RWPE1 (cell line): ENCODE measurements at regions of chr3 and their contacts with region 1.

Region 1: GRCh38 chr3:130761730-130762311 is 15.2 kb upstream of the PIK3R4 start:
- DNase-seq: no peak
- H3K27ac ChIP-seq: no peak overlapping the region
- CTCF ChIP-seq: no peak

Region 2: DNA sequence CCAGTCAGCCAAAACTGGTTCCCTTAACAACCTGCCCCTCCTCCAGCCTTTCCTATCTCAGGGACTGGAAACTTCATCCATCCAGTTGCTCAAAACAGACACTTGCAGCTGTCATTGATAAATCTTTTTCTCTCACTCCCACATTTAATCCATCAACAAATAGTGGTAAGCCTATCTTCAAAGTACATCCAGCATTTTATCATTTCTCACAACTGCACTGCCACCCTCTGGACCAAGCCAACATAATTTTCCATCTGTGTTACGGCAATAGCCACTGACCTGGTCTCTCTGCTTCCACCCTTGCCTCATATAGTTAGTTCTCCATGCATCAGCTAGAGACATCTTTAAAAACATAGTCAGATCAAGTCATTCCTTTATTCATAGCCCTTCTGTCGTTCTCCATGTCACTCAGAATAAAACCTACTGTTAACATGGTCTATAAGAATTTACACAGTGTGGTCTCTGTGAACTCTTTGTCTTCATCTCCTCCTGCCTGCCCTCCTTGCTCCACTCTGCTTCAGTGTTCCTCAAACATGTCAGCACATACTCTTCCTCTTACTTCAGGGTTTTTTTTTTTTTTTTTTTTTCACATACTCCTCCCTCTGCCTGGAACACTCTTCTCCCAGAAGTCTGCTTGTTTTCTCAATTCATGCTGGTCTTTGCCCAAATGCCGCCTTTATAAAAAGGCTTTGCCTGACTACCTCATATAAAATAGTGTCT is 518.8 kb before region 1 on chr3:
- CTCF ChIA-PET with region 1: no interaction called
- POLR2A ChIA-PET with region 1: no interaction called
- DNase-seq: no peak
- H3K27ac ChIP-seq: no peak overlapping the region
- CTCF ChIP-seq: no peak

Region 3: GRCh38 chr3:130787422-130788068 is 25.7 kb after region 1 on chr3:
- CTCF ChIA-PET with region 1: no interaction called
- POLR2A ChIA-PET with region 1: interaction called, 12 read pairs
- DNase-seq: no peak
- H3K27ac ChIP-seq: no peak overlapping the region
- CTCF ChIP-seq: no peak

Region 4: DNA sequence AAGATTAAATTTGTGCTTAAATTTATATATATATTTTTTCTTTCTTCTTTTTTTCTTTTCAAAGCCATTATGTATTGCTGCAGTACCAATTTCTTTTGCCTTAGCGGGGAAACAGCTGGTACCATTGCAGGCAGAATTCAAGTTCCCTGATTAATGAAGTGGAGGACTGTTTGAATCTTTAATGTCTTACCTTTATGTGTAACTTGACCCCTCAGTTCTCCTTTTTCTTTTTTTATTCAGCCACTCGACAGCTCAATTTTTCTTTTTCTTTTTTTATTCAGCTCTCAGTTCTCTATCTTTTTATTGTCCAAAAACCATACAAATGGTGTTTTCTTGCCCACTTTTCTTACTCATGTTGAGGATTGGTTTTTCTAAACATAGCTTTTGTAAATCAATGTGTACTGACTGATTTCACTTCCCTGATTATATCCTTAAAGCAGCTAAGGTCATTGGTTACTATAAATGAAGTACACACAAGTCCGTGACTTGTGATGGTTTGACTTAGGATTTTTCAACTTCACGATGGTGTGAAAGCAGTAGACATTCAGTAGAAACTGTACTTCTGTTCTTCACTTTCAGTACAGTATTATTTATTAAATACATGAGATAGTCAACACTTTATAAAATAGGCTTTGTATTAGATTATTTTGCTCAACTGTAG is 154.8 kb after region 1 on chr3:
- CTCF ChIA-PET with region 1: no interaction called
- POLR2A ChIA-PET with region 1: no interaction called
- DNase-seq: no peak
- H3K27ac ChIP-seq: no peak overlapping the region
- CTCF ChIP-seq: no peak